Activated CD4-positive, alpha-beta T cell treated with anti-CD3 and anti-CD28 coated beads, Interleukin-2, amount 10 ng/mL, durations not matched to agents 24 days and 14 days (primary cell): ENCODE measurements at regions of chr10 and their contacts with region 1.

Region 1: DNA sequence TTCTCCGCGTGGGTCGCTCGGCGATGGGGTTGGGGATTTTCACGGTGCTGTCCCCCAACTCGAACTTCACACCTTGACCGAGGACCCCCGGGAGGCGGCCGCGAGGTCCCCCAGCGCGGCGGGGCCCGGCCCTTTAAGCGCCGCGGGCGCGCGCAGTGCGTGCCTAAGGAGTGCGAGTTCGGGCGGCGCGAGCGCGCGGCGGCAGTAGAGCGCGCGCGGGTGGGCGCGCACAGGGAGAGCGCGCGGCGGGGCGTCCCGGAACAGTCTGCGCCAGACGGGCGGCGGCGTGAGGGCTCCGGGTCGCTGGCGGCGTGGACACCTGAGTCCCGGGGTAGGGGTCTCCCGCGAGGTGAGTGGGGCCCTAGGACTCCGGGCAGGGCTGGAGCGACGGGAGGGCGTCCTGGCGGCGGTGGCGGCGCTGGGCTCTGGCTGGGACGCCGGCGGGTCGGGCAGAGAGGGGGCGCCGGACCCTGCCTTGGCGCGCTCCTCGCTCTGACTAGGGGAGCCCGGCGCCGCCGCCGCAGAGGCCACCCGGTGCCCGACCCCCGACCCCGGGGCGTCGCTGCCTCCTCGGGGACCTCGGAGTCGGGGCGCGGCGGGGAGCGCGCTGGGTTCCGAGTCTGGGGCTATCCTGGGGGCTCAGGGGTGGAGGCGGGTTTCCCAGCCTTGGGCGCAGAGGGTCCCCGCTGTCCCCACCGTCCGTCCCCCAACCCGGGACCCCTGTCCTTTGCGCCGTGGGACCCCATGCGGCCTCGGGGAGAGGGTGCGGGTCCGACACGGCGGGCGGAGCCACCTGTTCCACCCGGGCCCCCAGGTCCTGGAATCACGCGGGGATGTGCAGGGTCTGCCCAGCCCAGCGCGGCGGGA is at the start of gene PROSER2:
- DNase-seq: peak; percentile 79
- H3K4me3 Mint-ChIP-seq: peak within 1 kb of the TSS; percentile 73
- H3K27ac Mint-ChIP-seq: no peak within 1 kb of the TSS
- H3K4me1 Mint-ChIP-seq: peaks cover 7% of the 10 kb centered on the region
- H3K27me3 Mint-ChIP-seq: peaks cover 56% of the 10 kb centered on the region
- total RNA-seq, gene PROSER2: 0.24 and 0.37 TPM in 2 replicates

Region 2: DNA sequence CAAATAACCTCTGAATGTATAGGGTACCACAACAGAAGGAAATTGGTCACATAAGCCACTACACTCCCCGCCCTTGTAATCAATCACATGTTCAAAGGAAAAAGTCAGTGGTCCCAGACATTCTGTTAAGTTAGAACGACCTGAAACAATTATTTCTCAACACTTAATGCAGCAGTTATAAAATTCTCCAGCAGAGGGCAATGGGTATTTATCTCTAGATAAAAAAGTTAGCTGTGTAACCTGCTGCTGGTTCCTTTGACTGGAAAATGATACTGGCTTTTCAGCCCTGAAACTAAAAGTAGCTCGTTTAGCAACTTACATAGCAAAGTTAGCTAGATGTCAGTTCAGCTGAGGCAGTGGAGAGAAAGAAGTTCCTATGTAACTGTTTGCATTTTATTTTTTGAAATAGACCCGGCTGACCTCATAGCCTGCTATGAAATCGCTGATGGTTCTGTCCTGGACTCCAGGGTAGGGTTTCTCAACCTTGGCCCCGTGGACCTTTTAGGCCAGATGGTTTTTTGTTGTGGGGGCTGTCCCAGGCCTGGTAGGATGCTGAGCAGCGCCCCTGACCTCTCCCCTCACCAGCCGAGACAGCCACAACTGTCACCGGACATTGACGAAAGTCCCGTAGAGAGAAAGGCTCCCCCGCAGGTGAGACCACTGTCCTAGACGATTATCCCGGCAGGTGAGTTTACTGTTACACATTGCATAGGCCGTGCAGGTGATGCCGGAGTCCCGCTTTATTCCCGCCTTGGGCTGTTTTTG is 40.4 kb before region 1 on chr10:
- intact Hi-C with region 1: no loop called
- DNase-seq: peak; percentile 79
- H3K4me3 Mint-ChIP-seq: no peak overlapping the region
- H3K27ac Mint-ChIP-seq: no peak overlapping the region
- H3K4me1 Mint-ChIP-seq: peaks cover 5% of the 10 kb centered on the region
- H3K27me3 Mint-ChIP-seq: peaks cover 6% of the 10 kb centered on the region

Region 3: GRCh38 chr10:11863353-11864109 is 40.2 kb after region 1 on chr10:
- intact Hi-C with region 1: loop called (anchors 5 kb)
- DNase-seq: peak; percentile 93
- H3K4me3 Mint-ChIP-seq: peak overlapping the region; percentile 59
- H3K27ac Mint-ChIP-seq: peak overlapping the region; percentile 69
- H3K4me1 Mint-ChIP-seq: peaks cover 17% of the 10 kb centered on the region
- H3K27me3 Mint-ChIP-seq: peaks cover 68% of the 10 kb centered on the region